ENCODE measurements at regions of chr4 and their contacts with region 1.

Region 1: GRCh38 chr4:168831919-168832762 is 177.9 kb downstream of the CBR4 start:
- DNase-seq: peak; percentile 55 to 83
- H3K4me3 ChIP-seq: peak overlapping the region; percentile 78
- H3K27ac ChIP-seq: 0 out of 2 replicates have a peak overlapping the region, but pooled peaks have one; percentile 37
- H3K4me1 ChIP-seq: peaks cover 8% of the 10 kb centered on the region; the same call in 1 of the 2 replicates
- H3K27me3 ChIP-seq: no peaks in the 10 kb centered on the region
- CTCF ChIP-seq: no peak

Region 2: DNA sequence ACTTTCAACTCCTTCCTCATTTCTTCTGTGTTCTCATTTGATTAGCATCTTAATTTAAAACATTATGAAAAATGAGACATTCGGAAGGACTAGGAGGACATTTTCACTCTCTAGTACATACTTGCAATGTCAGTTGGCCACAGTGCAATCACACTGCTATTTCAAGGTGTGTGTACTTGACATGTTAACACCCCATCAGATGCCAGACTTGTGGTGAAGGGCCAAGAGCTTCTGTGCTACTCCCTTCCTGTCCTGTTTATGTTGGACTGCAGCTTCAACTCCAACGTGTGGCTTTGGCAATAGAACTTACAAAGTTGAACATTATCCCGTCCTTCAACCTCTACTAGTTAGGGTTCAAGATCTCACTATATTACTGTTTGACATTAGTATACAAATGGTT is 114.3 kb before region 1 on chr4:
- CTCF ChIA-PET with region 1: no interaction called
- POLR2A ChIA-PET with region 1: no interaction called
- intact Hi-C with region 1: loop called (anchors 5 kb)
- DNase-seq: no peak
- H3K4me3 ChIP-seq: no peak overlapping the region
- H3K27ac ChIP-seq: no peak overlapping the region
- H3K4me1 ChIP-seq: no peaks in the 10 kb centered on the region
- H3K27me3 ChIP-seq: no peaks in the 10 kb centered on the region
- CTCF ChIP-seq: no peak

Region 3: GRCh38 chr4:168765726-168766125 is 66.4 kb before region 1 on chr4:
- CTCF ChIA-PET with region 1: no interaction called
- POLR2A ChIA-PET with region 1: no interaction called
- intact Hi-C with region 1: loop called (anchors 1 kb)
- DNase-seq: peak in 1 of 2 experiments; percentile 73
- H3K4me3 ChIP-seq: no peak overlapping the region
- H3K27ac ChIP-seq: no peak overlapping the region
- H3K4me1 ChIP-seq: no peaks in the 10 kb centered on the region
- H3K27me3 ChIP-seq: no peaks in the 10 kb centered on the region
- CTCF ChIP-seq: no peak

Region 4: GRCh38 chr4:168797176-168797575 is 35.0 kb before region 1 on chr4:
- CTCF ChIA-PET with region 1: no interaction called
- POLR2A ChIA-PET with region 1: interaction called, 26 read pairs
- intact Hi-C with region 1: loop called (anchors 2 kb)
- DNase-seq: peak in 1 of 2 experiments; percentile 62
- H3K4me3 ChIP-seq: no peak overlapping the region; the same call in 1 of the 2 replicates
- H3K27ac ChIP-seq: peak overlapping the region; percentile 56
- H3K4me1 ChIP-seq: peaks cover 25% of the 10 kb centered on the region
- H3K27me3 ChIP-seq: no peaks in the 10 kb centered on the region
- CTCF ChIP-seq: no peak